GM12878 (cell line): ENCODE measurements at regions of chr18 and their contacts with region 1.

Region 1: DNA sequence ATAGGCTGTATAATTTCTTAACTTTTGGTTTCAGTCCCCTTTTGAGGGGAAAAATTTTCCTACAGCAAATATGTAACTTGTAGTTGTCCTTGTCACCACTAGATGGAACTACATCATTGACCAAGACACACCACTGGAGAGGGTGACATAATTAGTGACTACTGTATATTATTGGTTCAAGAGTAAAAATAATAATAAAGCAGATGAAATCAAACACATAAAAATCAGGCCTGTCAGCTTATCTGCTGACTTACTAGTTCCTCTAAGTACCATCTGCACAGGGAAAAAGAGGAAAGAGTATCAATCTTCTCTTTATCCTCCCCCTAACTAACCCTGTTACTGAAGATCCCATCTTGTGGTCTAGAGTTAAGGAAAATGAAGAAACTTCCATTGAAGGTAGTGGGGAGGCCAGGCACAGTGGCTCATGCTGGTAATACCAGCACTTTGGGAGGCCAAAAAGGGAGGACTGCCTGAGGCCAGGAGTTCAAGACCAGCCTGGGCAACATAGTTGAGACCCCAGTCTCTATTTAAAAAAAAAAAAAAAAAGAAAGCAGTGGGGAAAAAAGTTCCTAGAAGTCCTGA is 29.6 kb upstream of the ENOSF1 start:
- DNase-seq: peak; percentile 30
- ATAC-seq: peak; percentile 93
- H3K4me3 ChIP-seq: no peak overlapping the region
- H3K27ac ChIP-seq: no peak overlapping the region
- H3K4me1 ChIP-seq: no peaks in the 10 kb centered on the region
- H3K27me3 ChIP-seq: no peaks in the 10 kb centered on the region
- CTCF ChIP-seq: peak; percentile 52 to 79 (median 65); a peak in 5 of 6 replicates
- EP300 ChIP-seq: no peak
- POLR2A ChIP-seq: no peak
- RAD21 ChIP-seq: peak; percentile 91

Region 2: GRCh38 chr18:427005-427404 is 315.0 kb before region 1 on chr18:
- CTCF ChIA-PET with region 1: no interaction called
- POLR2A ChIA-PET with region 1: no interaction called
- RAD21 ChIA-PET with region 1: no interaction called
- SMC1A ChIA-PET with region 1: no interaction called
- in situ Hi-C with region 1: no loop called
- intact Hi-C with region 1: no loop called
- DNase-seq: no peak
- ATAC-seq: no peak
- H3K4me3 ChIP-seq: no peak overlapping the region
- H3K27ac ChIP-seq: no peak overlapping the region
- H3K4me1 ChIP-seq: no peaks in the 10 kb centered on the region
- H3K27me3 ChIP-seq: no peaks in the 10 kb centered on the region
- CTCF ChIP-seq: no peak
- EP300 ChIP-seq: no peak
- POLR2A ChIP-seq: no peak
- RAD21 ChIP-seq: no peak

Region 3: GRCh38 chr18:778194-778927 is 36.3 kb after region 1 on chr18:
- CTCF ChIA-PET with region 1: interaction called, 13 read pairs
- POLR2A ChIA-PET with region 1: no interaction called
- RAD21 ChIA-PET with region 1: no interaction called
- SMC1A ChIA-PET with region 1: interaction called, 4 read pairs
- in situ Hi-C with region 1: no loop called
- intact Hi-C with region 1: no loop called
- DNase-seq: no peak
- ATAC-seq: no peak; the same call in 2 of the 3 replicates
- H3K4me3 ChIP-seq: no peak overlapping the region
- H3K27ac ChIP-seq: no peak overlapping the region
- H3K4me1 ChIP-seq: no peaks in the 10 kb centered on the region
- H3K27me3 ChIP-seq: no peaks in the 10 kb centered on the region
- CTCF ChIP-seq: no peak
- EP300 ChIP-seq: no peak
- POLR2A ChIP-seq: no peak
- RAD21 ChIP-seq: no peak

Region 4: DNA sequence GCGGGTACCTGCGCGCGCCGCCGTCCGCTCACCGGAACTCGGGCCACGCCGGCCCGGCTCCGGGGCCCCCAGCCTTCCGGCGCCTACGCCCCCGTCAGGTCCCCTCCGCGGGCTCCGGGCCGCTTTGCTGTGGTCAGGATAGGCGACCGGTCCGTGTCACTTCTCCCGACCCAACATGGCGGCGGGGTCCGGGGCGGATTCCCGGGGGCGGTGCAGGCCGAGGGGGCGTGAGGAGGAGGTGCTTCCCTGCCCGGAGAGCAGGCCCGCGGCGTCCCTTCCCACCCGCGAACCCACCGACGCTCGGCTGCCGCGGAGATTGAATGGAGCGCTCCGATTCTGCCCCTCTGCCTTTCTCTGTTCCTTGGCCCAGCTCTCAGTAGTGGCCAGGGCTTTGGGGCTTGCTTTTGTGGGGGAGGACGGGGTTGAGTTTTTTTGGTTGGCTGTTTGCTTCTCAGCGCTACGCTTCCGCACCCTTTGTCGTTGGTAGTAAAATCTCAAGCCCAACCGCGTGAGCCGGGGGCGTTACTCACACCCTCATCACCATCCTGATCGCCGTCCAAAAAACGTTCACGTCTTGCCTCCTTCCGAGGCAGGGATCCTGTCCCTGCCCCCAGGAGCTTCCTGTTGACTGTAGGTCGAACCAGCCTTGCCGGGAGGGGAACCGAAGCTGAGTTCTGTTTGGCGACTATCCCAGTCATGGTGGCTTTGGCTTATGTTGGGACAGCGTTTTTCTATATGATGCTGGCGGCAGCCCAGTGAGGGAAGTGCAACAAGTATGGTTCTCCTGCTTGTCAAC is 70.6 kb after region 1 on chr18:
- CTCF ChIA-PET with region 1: interaction called, 10 read pairs
- POLR2A ChIA-PET with region 1: no interaction called
- RAD21 ChIA-PET with region 1: interaction called, 6 read pairs
- SMC1A ChIA-PET with region 1: interaction called, 27 read pairs
- in situ Hi-C with region 1: no loop called
- intact Hi-C with region 1: loop called (anchors 5 kb)
- DNase-seq: peak; percentile 39
- ATAC-seq: peak; percentile 77
- H3K4me3 ChIP-seq: peak overlapping the region; percentile 67
- H3K27ac ChIP-seq: peak overlapping the region; percentile 81
- H3K4me1 ChIP-seq: no peaks in the 10 kb centered on the region
- H3K27me3 ChIP-seq: no peaks in the 10 kb centered on the region
- CTCF ChIP-seq: no peak
- EP300 ChIP-seq: peak in 1 of 2 experiments; percentile 41; a peak in 1 of 4 replicates
- POLR2A ChIP-seq: peak; percentile 74
- RAD21 ChIP-seq: no peak

Region 5: DNA sequence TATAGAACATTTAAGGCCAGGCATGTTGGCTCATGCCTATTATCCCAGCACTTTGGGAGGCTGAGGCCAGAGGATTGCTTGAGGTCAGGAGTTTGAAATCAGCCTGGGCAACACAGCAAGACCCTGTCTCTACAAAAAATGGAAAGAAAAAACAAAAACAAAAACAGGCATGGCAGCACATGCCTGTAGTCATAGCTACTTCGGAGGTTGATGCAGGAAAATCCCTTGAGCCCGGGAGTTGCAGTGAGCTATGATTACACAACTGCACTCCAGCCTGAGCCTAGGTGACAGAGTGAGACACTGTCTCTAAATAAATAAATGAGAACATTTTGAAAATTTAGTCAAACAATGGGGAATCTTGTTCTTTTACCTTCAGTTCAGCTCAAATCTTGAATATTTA is 82.2 kb after region 1 on chr18:
- CTCF ChIA-PET with region 1: interaction called, 295 read pairs
- POLR2A ChIA-PET with region 1: no interaction called
- RAD21 ChIA-PET with region 1: interaction called, 158 read pairs
- SMC1A ChIA-PET with region 1: interaction called, 222 read pairs
- in situ Hi-C with region 1: no loop called
- intact Hi-C with region 1: no loop called
- DNase-seq: no peak
- ATAC-seq: peak; percentile 59
- H3K4me3 ChIP-seq: no peak overlapping the region
- H3K27ac ChIP-seq: no peak overlapping the region
- H3K4me1 ChIP-seq: no peaks in the 10 kb centered on the region
- H3K27me3 ChIP-seq: no peaks in the 10 kb centered on the region; a peak in 1 of 4 replicates
- CTCF ChIP-seq: no peak
- EP300 ChIP-seq: no peak
- POLR2A ChIP-seq: no peak
- RAD21 ChIP-seq: no peak

Region 6: GRCh38 chr18:839224-840022 is 97.4 kb after region 1 on chr18:
- CTCF ChIA-PET with region 1: interaction called, 295 read pairs
- POLR2A ChIA-PET with region 1: no interaction called
- RAD21 ChIA-PET with region 1: interaction called, 158 read pairs
- SMC1A ChIA-PET with region 1: interaction called, 222 read pairs
- in situ Hi-C with region 1: loop called (anchors 5 kb)
- intact Hi-C with region 1: loop called (anchors 2 kb)
- DNase-seq: peak; percentile 25
- ATAC-seq: peak; percentile 100
- H3K4me3 ChIP-seq: no peak overlapping the region
- H3K27ac ChIP-seq: no peak overlapping the region
- H3K4me1 ChIP-seq: no peaks in the 10 kb centered on the region
- H3K27me3 ChIP-seq: no peaks in the 10 kb centered on the region
- CTCF ChIP-seq: peak; percentile 93 to 96 (median 96); a peak in 5 of 6 replicates
- EP300 ChIP-seq: no peak
- POLR2A ChIP-seq: no peak
- RAD21 ChIP-seq: peak; percentile 68

Region 7: GRCh38 chr18:961644-962355 is 219.8 kb after region 1 on chr18:
- CTCF ChIA-PET with region 1: no interaction called
- POLR2A ChIA-PET with region 1: no interaction called
- RAD21 ChIA-PET with region 1: no interaction called
- SMC1A ChIA-PET with region 1: no interaction called
- in situ Hi-C with region 1: loop called (anchors 25 kb)
- intact Hi-C with region 1: no loop called
- DNase-seq: no peak
- ATAC-seq: no peak
- H3K4me3 ChIP-seq: no peak overlapping the region
- H3K27ac ChIP-seq: no peak overlapping the region
- H3K4me1 ChIP-seq: no peaks in the 10 kb centered on the region
- H3K27me3 ChIP-seq: no peaks in the 10 kb centered on the region
- CTCF ChIP-seq: peak; percentile 65 to 89 (median 81); a peak in 5 of 6 replicates
- EP300 ChIP-seq: no peak
- POLR2A ChIP-seq: no peak
- RAD21 ChIP-seq: peak; percentile 49